A673 (cell line): ENCODE measurements at regions of chr15 and their contacts with region 1.

Region 1: GRCh38 chr15:96893159-96893906 is 562.8 kb downstream of the NR2F2 start:
- DNase-seq: peak; percentile 90
- H3K4me3 ChIP-seq: no peak overlapping the region
- H3K27ac ChIP-seq: peak overlapping the region; percentile 89
- H3K4me1 ChIP-seq: peaks cover 77% of the 10 kb centered on the region
- H3K27me3 ChIP-seq: no peaks in the 10 kb centered on the region
- CTCF ChIP-seq: peak; percentile 91

Region 2: DNA sequence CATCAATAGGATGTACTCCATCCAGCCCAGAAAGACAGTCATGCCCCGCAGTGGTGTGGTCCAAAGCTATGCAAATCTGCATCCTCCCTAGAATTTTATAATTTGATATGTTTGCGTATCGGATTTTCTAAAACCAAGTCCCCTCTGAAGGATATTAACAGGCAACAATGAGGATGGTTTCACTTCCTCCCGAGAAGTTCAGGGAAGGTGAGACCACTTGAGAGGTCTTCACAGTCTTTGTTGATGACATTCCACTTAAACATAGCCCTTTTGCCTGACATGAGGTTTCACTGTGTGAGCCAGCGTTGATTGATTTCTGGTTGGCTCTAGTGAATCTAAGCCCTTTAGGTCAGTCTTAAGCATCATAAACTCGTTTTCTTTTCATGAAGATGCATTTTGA is 286.7 kb before region 1 on chr15:
- CTCF ChIA-PET with region 1: no interaction called
- POLR2A ChIA-PET with region 1: no interaction called
- intact Hi-C with region 1: loop called (anchors 10 kb)
- DNase-seq: no peak
- H3K4me3 ChIP-seq: no peak overlapping the region
- H3K27ac ChIP-seq: no peak overlapping the region
- H3K4me1 ChIP-seq: peaks cover 4% of the 10 kb centered on the region
- H3K27me3 ChIP-seq: no peaks in the 10 kb centered on the region
- CTCF ChIP-seq: no peak

Region 3: DNA sequence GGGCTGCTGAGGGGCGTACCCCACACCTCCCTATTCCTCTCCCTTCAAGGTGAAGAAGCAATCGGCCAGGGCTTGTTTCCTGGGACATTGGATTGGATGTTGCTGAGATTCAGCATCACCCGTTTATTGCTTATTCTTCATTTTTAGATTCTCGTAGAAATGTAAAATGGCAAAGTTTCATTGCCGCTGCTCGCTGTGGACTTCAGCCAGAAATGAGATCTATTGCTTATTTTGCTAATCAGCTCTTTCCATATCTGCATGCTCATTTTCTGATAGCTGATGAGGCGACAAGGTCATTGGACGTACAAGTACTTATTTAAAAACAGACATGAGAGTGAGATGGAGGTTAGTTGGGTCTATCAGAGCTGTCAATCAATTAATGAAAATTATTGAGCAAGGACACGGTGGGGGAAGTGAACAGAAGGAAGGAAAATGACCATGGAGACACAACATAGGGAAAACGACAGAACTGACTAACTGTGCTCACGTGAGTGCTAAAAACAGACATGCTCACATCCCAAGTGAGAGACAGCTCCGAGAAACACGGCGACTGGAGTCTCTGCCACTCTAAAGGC is 91.7 kb before region 1 on chr15:
- CTCF ChIA-PET with region 1: interaction called, 11 read pairs
- POLR2A ChIA-PET with region 1: no interaction called
- intact Hi-C with region 1: no loop called
- DNase-seq: no peak
- H3K4me3 ChIP-seq: no peak overlapping the region
- H3K27ac ChIP-seq: no peak overlapping the region
- H3K4me1 ChIP-seq: no peaks in the 10 kb centered on the region
- H3K27me3 ChIP-seq: no peaks in the 10 kb centered on the region
- CTCF ChIP-seq: no peak

Region 4: DNA sequence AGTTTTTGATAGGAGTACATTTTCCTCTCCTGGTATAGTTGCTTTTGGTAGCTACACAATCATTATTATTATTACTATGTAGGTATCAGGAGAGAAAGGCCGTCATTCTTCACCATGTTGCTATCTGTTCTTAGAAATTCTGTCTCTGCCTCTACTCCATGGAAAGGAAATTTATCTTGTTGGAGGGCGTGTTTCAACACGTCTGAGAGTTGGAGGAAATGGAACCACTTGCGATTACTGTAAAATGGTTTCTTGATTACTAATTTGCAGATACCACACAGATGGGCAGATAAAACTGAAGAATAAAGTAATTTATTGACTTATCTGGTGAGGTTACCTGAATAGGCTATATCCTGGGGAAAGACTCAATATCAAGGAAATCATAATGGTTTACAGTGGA is 74.5 kb before region 1 on chr15:
- CTCF ChIA-PET with region 1: no interaction called
- POLR2A ChIA-PET with region 1: no interaction called
- intact Hi-C with region 1: no loop called
- DNase-seq: no peak
- H3K4me3 ChIP-seq: no peak overlapping the region
- H3K27ac ChIP-seq: no peak overlapping the region
- H3K4me1 ChIP-seq: peaks cover 9% of the 10 kb centered on the region
- H3K27me3 ChIP-seq: no peaks in the 10 kb centered on the region
- CTCF ChIP-seq: no peak

Region 5: DNA sequence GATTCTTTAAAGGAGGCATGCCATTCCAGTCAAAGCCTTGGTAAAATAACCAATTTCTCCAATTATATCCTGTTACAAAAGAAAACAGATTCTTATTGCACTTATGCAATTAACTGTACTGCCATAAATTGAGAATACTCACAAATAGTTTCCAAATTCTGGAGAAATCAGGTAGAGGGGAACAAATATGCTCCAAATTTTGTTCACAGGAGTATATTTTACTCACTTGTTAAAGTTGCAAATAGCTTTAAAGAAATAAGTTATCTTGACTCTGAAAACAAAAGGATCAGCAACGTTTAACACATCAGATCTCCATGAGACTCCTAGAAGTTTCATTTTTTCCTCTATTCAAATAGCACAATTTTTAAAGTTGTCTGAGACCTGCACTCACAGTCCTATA is 355.0 kb after region 1 on chr15:
- CTCF ChIA-PET with region 1: interaction called, 11 read pairs
- POLR2A ChIA-PET with region 1: no interaction called
- intact Hi-C with region 1: no loop called
- DNase-seq: no peak
- H3K4me3 ChIP-seq: no peak overlapping the region
- H3K27ac ChIP-seq: no peak overlapping the region
- H3K4me1 ChIP-seq: peaks cover 5% of the 10 kb centered on the region
- H3K27me3 ChIP-seq: no peaks in the 10 kb centered on the region
- CTCF ChIP-seq: no peak